HepG2 (cell line): ENCODE measurements at regions of chr18 and their contacts with region 1.

Region 1: DNA sequence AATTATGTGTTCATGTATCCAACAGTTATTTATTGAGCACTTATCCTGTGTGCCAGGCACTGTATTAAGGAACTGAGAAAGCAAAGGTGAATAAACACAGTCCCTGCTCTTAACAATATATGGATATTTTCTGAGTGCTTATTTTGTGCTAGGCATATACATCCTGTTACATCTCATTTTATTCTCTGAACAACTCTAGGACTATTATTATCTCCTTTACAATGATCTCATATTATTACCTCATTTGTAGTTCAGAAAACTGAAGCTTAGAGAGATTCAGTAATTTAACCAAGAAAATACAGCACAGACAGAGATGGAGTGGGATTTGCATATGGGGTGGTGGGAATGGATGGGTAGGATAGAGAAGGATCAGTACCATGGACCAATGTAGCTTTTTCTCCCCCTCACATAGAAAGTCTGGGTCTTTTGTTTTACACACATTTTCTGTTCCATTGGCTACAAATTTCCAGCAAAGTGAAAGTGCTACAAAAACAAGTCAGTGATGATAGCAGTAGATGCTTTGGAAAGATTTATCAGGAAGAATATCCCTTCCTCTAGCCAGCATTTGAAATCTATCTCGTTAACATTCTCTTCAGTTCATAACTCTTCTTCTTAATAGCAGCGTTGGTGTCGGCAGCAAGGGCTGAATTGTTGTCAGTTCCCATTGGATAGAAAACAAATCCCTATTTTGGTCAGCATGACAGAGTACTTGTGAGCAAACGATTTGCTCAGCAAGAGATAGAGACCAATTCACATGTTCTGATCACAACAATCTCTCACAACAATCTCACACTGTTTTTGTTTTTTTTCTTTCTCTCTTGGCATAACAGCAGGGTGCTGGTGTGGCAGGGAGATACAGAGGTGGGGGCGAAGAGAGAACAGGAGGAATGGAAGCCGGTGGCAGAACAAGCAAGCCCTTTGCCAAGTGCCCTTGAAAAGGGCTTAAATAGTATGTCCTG is 102.2 kb upstream of the KCTD1 start:
- DNase-seq: no peak
- ATAC-seq: no peak
- H3K4me3 ChIP-seq: no peak overlapping the region
- H3K27ac ChIP-seq: no peak overlapping the region
- H3K4me1 ChIP-seq: no peaks in the 10 kb centered on the region
- H3K27me3 ChIP-seq: peaks cover 3 to 36% of the 10 kb centered on the region in 2 experiments; a peak in 3 of 5 replicates
- CTCF ChIP-seq: no peak
- EP300 ChIP-seq: no peak
- POLR2A ChIP-seq: no peak
- RAD21 ChIP-seq: no peak

Region 2: GRCh38 chr18:26207937-26208336 is 442.7 kb before region 1 on chr18:
- CTCF ChIA-PET with region 1: no interaction called
- POLR2A ChIA-PET with region 1: no interaction called
- in situ Hi-C with region 1: no loop called
- intact Hi-C with region 1: no loop called
- DNase-seq: no peak
- ATAC-seq: no peak
- H3K4me3 ChIP-seq: no peak overlapping the region
- H3K27ac ChIP-seq: no peak overlapping the region
- H3K4me1 ChIP-seq: no peaks in the 10 kb centered on the region
- H3K27me3 ChIP-seq: no peaks in the 10 kb centered on the region; a peak in 1 of 5 replicates
- CTCF ChIP-seq: no peak
- EP300 ChIP-seq: no peak
- POLR2A ChIP-seq: no peak
- RAD21 ChIP-seq: no peak

Region 3: DNA sequence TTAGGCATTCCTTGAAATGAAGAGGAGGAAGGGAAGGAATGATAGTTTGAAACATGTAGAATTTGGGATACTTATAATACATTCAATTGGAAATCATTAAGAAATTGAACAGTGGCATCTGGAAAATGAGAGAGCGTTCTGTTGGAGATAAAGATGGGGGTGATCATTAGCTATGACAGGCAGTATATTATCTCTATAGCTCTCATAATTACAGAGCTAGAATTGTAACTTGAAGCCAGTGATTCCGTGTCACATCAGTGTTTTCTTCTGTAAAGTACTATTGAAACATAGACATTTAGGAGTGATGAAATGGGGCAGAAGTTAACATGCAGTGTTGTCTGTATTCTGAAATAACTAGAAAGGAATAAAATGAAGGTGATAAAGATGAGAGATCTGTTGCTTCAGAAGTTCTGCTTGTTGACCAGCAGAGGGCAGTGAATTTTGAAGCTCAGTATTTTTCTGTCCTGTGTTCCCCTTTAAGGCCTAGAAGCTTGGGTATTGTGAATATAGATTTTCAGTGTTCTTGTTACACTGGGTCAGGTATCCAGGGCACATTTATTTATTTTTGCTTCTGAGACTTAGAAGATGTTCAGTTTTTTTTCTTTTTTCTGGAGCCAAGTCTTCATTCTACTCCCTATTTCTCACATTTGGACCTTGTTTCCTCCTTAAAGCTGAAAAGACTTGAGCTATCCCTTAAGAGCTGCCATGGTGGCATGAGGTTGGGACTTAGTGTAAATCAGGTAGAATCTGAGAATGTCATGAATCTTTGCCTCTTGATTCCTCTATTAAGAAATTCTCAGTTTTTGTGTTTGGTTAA is 266.9 kb before region 1 on chr18:
- CTCF ChIA-PET with region 1: interaction called, 7 read pairs
- POLR2A ChIA-PET with region 1: no interaction called
- in situ Hi-C with region 1: no loop called
- intact Hi-C with region 1: loop called (anchors 1 kb)
- DNase-seq: peak; percentile 35
- ATAC-seq: peak; percentile 75
- H3K4me3 ChIP-seq: no peak overlapping the region
- H3K27ac ChIP-seq: no peak overlapping the region
- H3K4me1 ChIP-seq: peaks cover 15% of the 10 kb centered on the region
- H3K27me3 ChIP-seq: no peaks in the 10 kb centered on the region
- CTCF ChIP-seq: peak; percentile 63
- EP300 ChIP-seq: no peak
- POLR2A ChIP-seq: no peak
- RAD21 ChIP-seq: peak; percentile 31; the same call in 1 of the 2 replicates

Region 4: GRCh38 chr18:26405190-26405801 is 245.3 kb before region 1 on chr18:
- CTCF ChIA-PET with region 1: interaction called, 12 read pairs
- POLR2A ChIA-PET with region 1: no interaction called
- in situ Hi-C with region 1: loop called (anchors 5 kb)
- intact Hi-C with region 1: loop called (anchors 1 kb)
- DNase-seq: peak; percentile 30
- ATAC-seq: peak; percentile 95
- H3K4me3 ChIP-seq: no peak overlapping the region
- H3K27ac ChIP-seq: no peak overlapping the region
- H3K4me1 ChIP-seq: no peaks in the 10 kb centered on the region
- H3K27me3 ChIP-seq: peaks cover 3 to 38% of the 10 kb centered on the region in 2 experiments; a peak in 3 of 5 replicates
- CTCF ChIP-seq: peak; percentile 80
- EP300 ChIP-seq: no peak
- POLR2A ChIP-seq: no peak
- RAD21 ChIP-seq: peak; percentile 73